IMR-90 (cell line): ENCODE measurements at regions of chr4 and their contacts with region 1.

Region 1: GRCh38 chr4:55169352-55169961 is 44.1 kb upstream of the KDR start:
- DNase-seq: peak; percentile 50
- ATAC-seq: peak; percentile 76
- H3K4me3 ChIP-seq: no peak overlapping the region
- H3K27ac ChIP-seq: no peak overlapping the region
- H3K4me1 ChIP-seq: peaks cover 2% of the 10 kb centered on the region
- H3K27me3 ChIP-seq: no peaks in the 10 kb centered on the region
- CTCF ChIP-seq: no peak
- POLR2A ChIP-seq: no peak
- RAD21 ChIP-seq: no peak

Region 2: GRCh38 chr4:55157559-55158277 is 11.7 kb before region 1 on chr4:
- CTCF ChIA-PET with region 1: no interaction called
- POLR2A ChIA-PET with region 1: no interaction called
- dilution Hi-C with region 1: no loop called
- in situ Hi-C with region 1: no loop called
- intact Hi-C with region 1: loop called (anchors 1 kb)
- DNase-seq: no peak
- ATAC-seq: peak; percentile 42
- H3K4me3 ChIP-seq: peak overlapping the region; percentile 32
- H3K27ac ChIP-seq: no peak overlapping the region
- H3K4me1 ChIP-seq: peaks cover 3% of the 10 kb centered on the region; the same call in 1 of the 2 replicates
- H3K27me3 ChIP-seq: peaks cover 14% of the 10 kb centered on the region
- CTCF ChIP-seq: no peak
- POLR2A ChIP-seq: no peak
- RAD21 ChIP-seq: no peak

Region 3: DNA sequence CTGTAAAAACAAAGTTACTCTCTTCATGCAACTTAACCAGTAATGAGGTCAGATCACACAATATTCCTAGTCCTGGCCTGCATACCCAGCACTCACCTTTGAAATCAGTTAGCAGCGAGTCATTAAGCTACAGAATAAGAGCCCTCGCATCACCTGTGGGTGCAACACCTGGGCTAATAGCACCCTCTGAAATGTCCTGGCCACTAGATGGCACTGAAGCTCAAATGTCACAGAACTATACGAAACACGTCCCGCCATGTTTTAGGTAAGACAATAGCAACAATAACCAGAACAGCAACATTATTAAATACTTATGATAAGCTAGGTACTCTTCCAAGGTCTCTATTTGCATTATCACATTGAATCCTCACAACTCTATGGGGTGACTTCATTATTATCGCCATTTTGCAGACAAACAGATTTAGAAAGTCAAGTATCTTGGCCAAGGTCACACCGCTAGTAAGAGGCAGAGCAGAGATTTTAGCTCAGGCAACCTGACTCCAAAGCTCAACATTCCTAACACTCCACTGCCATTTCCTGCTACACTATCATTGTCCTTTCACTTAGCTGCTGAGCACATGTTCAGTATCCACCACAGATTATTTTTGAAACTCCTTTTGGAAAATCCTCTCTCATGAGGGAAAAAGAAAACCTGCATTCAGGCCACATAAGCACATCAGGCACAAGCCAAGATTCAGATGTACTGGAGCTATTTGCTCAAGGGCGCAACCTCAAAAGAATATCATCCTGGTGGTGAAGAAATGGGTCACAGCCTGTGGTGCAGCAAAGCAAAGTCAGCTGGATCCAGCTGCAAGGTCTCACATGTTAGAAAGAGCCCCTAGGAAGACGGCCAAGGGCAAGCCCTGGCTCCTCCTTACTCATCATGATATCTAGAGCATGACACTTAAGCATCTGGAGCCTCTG is 15.4 kb after region 1 on chr4:
- CTCF ChIA-PET with region 1: interaction called, 3 read pairs
- POLR2A ChIA-PET with region 1: interaction called, 19 read pairs
- dilution Hi-C with region 1: no loop called
- in situ Hi-C with region 1: no loop called
- intact Hi-C with region 1: no loop called
- DNase-seq: peak; percentile 66
- ATAC-seq: peak; percentile 31
- H3K4me3 ChIP-seq: no peak overlapping the region
- H3K27ac ChIP-seq: peak overlapping the region; percentile 72
- H3K4me1 ChIP-seq: peaks cover 6% of the 10 kb centered on the region
- H3K27me3 ChIP-seq: no peaks in the 10 kb centered on the region
- CTCF ChIP-seq: no peak
- POLR2A ChIP-seq: no peak
- RAD21 ChIP-seq: no peak